A673 (cell line): ENCODE measurements at regions of chr3 and their contacts with region 1.

Region 1: GRCh38 chr3:153043729-153044328 is 118.2 kb upstream of the RAP2B start:
- DNase-seq: no peak
- H3K4me3 ChIP-seq: peak overlapping the region; percentile 33
- H3K27ac ChIP-seq: no peak overlapping the region
- H3K4me1 ChIP-seq: no peaks in the 10 kb centered on the region
- H3K27me3 ChIP-seq: no peaks in the 10 kb centered on the region
- CTCF ChIP-seq: no peak

Region 2: DNA sequence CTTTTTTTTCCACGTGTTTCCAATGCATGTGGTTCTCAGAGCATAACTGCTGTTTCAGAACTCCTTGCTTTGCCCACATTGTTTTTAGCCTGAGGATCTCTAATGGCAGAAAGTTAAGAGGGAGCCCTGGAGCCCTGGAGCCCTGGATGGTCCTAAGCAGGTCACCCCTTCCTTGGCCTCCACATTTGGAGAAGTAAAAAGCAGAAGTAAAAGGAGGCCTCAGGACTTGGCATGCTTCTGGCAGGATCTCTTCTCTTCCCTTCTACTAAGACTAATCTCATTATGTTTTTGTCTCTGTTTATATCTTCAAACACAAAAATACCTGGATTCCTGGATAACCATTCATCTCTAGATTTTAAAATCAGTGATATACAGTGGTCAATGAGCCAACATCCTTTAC is 158.8 kb before region 1 on chr3:
- CTCF ChIA-PET with region 1: no interaction called
- POLR2A ChIA-PET with region 1: no interaction called
- intact Hi-C with region 1: no loop called
- DNase-seq: no peak
- H3K4me3 ChIP-seq: no peak overlapping the region
- H3K27ac ChIP-seq: no peak overlapping the region
- H3K4me1 ChIP-seq: no peaks in the 10 kb centered on the region
- H3K27me3 ChIP-seq: no peaks in the 10 kb centered on the region
- CTCF ChIP-seq: no peak

Region 3: GRCh38 chr3:153069598-153070510 is 26.0 kb after region 1 on chr3:
- CTCF ChIA-PET with region 1: no interaction called
- POLR2A ChIA-PET with region 1: no interaction called
- intact Hi-C with region 1: no loop called
- DNase-seq: no peak
- H3K4me3 ChIP-seq: no peak overlapping the region
- H3K27ac ChIP-seq: no peak overlapping the region
- H3K4me1 ChIP-seq: peaks cover 5% of the 10 kb centered on the region
- H3K27me3 ChIP-seq: no peaks in the 10 kb centered on the region
- CTCF ChIP-seq: no peak

Region 4: GRCh38 chr3:153209596-153209995 is 165.8 kb after region 1 on chr3:
- CTCF ChIA-PET with region 1: interaction called, 16 read pairs
- POLR2A ChIA-PET with region 1: no interaction called
- intact Hi-C with region 1: no loop called
- DNase-seq: peak; percentile 63
- H3K4me3 ChIP-seq: no peak overlapping the region
- H3K27ac ChIP-seq: no peak overlapping the region
- H3K4me1 ChIP-seq: peaks cover 7% of the 10 kb centered on the region
- H3K27me3 ChIP-seq: no peaks in the 10 kb centered on the region
- CTCF ChIP-seq: no peak

Region 5: GRCh38 chr3:153284282-153284938 is 240.6 kb after region 1 on chr3:
- CTCF ChIA-PET with region 1: no interaction called
- POLR2A ChIA-PET with region 1: no interaction called
- intact Hi-C with region 1: loop called (anchors 10 kb)
- DNase-seq: peak; percentile 78
- H3K4me3 ChIP-seq: no peak overlapping the region
- H3K27ac ChIP-seq: no peak overlapping the region
- H3K4me1 ChIP-seq: peaks cover 17% of the 10 kb centered on the region
- H3K27me3 ChIP-seq: no peaks in the 10 kb centered on the region
- CTCF ChIP-seq: no peak

Region 6: GRCh38 chr3:153443961-153444360 is 400.1 kb after region 1 on chr3:
- CTCF ChIA-PET with region 1: interaction called, 4 read pairs
- POLR2A ChIA-PET with region 1: no interaction called
- intact Hi-C with region 1: loop called (anchors 10 kb)
- DNase-seq: peak; percentile 54
- H3K4me3 ChIP-seq: no peak overlapping the region
- H3K27ac ChIP-seq: no peak overlapping the region
- H3K4me1 ChIP-seq: no peaks in the 10 kb centered on the region
- H3K27me3 ChIP-seq: no peaks in the 10 kb centered on the region
- CTCF ChIP-seq: peak; percentile 54

Region 7: GRCh38 chr3:153595186-153595815 is 551.5 kb after region 1 on chr3:
- CTCF ChIA-PET with region 1: interaction called, 3 read pairs
- POLR2A ChIA-PET with region 1: no interaction called
- intact Hi-C with region 1: loop called (anchors 2 kb)
- DNase-seq: peak; percentile 65
- H3K4me3 ChIP-seq: no peak overlapping the region
- H3K27ac ChIP-seq: no peak overlapping the region
- H3K4me1 ChIP-seq: peaks cover 7% of the 10 kb centered on the region
- H3K27me3 ChIP-seq: peaks cover 10% of the 10 kb centered on the region
- CTCF ChIP-seq: peak; percentile 63

Region 8: GRCh38 chr3:153768561-153769469 is 725.0 kb after region 1 on chr3:
- CTCF ChIA-PET with region 1: no interaction called
- POLR2A ChIA-PET with region 1: no interaction called
- intact Hi-C with region 1: loop called (anchors 5 kb)
- DNase-seq: peak; percentile 75
- H3K4me3 ChIP-seq: no peak overlapping the region
- H3K27ac ChIP-seq: no peak overlapping the region
- H3K4me1 ChIP-seq: no peaks in the 10 kb centered on the region
- H3K27me3 ChIP-seq: no peaks in the 10 kb centered on the region
- CTCF ChIP-seq: peak; percentile 84

Region 9: DNA sequence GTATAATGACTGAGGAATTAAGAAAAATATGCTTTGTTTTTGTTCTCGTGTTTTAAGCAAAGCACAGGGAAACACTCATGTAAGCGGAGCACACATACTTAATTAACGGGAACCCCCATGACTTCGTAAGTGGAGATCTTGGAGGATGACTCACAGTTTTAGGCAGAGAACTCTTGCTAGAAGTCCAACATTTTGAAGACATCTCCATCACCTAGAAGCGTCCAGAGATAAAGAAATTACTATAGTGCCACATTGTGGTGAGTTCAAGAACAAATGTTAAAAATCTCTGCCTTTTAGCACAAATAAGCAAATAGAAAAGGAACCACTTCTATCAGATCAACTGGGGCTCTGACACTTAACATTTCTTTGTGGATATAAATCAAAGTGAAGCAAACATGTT is 883.3 kb after region 1 on chr3:
- CTCF ChIA-PET with region 1: no interaction called
- POLR2A ChIA-PET with region 1: no interaction called
- intact Hi-C with region 1: loop called (anchors 5 kb)
- DNase-seq: peak; percentile 86
- H3K4me3 ChIP-seq: no peak overlapping the region
- H3K27ac ChIP-seq: no peak overlapping the region
- H3K4me1 ChIP-seq: no peaks in the 10 kb centered on the region
- H3K27me3 ChIP-seq: no peaks in the 10 kb centered on the region
- CTCF ChIP-seq: peak; percentile 55